Dendritic cell treated with granulocyte-macrophage colony-stimulating factor and Interleukin-4, amounts not matched to agents 40 ng/mL and 50 ng/mL, for 4 days (primary cell): ENCODE measurements at regions of chr1 and their contacts with region 1.

Region 1: DNA sequence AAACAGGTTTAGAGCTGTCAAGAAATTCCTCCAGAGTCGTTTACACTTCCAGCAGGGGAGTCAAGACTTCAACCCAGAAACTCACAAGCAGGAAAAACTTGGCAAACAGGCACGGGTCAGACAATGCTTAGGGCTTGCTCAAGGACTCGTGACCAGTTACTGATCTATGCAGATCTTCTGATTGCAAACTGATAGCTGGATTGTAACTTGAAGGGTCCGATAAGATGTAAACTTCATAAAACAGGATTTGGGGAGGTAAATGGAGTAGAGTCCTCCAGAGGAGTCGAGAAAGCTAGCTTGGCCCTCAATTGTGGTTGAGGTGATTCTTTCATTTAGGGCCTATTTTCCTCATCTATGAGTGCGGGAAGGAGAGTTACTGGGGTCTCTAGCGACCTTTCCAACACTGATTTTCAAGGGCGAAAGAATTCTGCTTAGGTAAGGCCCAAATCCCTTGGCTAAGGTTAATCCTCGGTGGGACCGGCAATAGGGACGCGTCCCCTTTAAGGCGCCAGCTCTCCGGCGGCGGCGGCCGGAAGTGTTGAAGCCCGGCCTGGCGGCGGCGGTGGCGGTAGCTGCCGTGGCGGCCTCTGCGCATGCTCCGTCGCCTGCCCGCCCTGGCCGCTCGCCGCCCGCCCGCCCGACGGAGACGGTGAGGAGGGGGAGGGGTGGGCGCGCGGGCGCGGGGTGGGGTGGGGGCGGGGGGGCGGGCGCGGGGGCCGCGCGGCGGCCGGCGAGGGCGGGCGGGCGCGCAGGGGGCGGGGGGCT is at the start of gene GMEB1:
- H3K4me3 Mint-ChIP-seq: peak within 1 kb of the TSS; percentile 88
- H3K27ac Mint-ChIP-seq: peak within 1 kb of the TSS; percentile 93
- H3K4me1 Mint-ChIP-seq: peaks cover 32% of the 10 kb centered on the region
- H3K27me3 Mint-ChIP-seq: no peaks in the 10 kb centered on the region

Region 2: DNA sequence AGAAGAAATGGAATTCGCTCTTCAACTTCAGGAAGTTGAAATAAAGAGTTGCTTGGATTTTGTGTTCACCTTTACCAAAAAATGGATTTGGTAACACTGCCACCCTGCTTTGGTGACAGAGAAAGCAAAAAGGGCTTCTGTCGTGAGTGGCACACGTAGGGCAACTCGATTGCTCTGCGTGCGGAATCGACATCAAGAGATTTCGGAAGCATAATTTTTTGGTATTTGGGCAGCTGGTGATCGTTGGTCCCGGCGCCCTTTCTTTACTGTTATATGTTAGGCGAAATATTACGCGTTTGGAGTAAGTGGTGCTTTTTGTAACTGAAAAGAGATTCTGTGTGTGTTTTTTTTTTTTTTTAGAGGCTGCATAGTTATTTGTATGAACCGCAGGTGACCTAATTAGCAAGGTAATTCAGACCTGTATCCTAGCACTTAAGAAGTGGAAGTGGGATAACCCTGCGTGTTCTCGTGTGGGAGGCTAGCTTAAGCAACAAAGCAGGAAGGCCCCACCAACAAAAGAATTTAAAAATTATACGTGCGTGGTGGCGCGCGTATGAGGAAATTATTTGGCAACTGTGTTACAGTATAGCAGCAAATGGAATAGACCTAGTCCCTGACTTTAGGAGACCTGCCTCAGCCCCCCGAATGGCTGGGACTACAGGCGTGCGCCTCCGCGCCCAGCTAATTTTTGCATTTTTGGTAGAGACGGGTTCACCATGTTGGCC is 19.7 kb before region 1 on chr1 and contains the start of gene RNU11:
- intact Hi-C with region 1: loop called (anchors 2 kb)
- H3K4me3 Mint-ChIP-seq: peak within 1 kb of the TSS; percentile 78
- H3K27ac Mint-ChIP-seq: peak within 1 kb of the TSS; percentile 97
- H3K4me1 Mint-ChIP-seq: peaks cover 38% of the 10 kb centered on the region
- H3K27me3 Mint-ChIP-seq: no peaks in the 10 kb centered on the region

Region 3: DNA sequence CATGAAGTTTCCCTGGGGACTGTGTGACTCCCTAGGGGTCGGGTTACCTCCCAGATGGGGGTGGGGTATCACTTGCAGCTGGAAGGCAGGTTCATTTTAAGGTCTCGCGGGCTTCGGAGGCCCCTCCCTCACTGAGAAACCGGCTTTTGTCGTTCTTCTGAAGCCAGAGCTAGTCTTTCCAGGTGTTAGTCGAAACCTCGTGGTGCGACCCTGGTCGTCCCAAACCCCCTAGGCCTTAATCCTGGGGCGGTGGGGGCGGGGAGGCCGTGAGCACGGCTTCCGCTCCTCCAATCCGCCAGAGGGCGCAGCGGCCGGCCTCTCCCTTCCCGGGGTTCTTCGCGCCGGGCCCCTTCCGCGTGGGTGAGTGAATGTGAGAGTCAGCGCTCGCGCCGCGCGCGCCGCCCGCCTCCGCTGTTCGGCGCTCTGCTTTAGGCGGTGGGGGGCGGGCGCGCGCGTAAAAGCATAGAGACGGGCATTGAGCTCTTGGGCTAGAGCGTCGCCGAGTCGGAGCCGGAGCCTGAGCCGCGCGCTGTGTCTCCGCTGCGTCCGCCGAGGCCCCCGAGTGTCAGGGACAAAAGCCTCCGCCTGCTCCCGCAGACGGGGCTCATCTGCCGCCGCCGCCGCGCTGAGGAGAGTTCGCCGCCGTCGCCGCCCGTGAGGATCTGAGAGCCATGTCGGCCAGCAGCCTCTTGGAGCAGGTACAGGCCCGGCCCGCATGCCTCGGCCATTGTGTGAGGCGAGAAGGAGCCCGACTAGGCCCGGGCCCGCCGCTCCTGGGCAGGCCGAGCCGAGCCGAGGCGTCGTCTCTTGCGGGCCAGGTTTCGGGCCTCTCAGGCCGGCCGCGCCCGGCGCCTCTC is 68.3 kb after region 1 on chr1 and contains the start of gene YTHDF2:
- intact Hi-C with region 1: loop called (anchors 2 kb)
- H3K4me3 Mint-ChIP-seq: peak within 1 kb of the TSS; percentile 90
- H3K27ac Mint-ChIP-seq: peak within 1 kb of the TSS; percentile 93
- H3K4me1 Mint-ChIP-seq: peaks cover 37% of the 10 kb centered on the region
- H3K27me3 Mint-ChIP-seq: no peaks in the 10 kb centered on the region